ENCODE measurements at regions of chr21 and their contacts with region 1.

Region 1: DNA sequence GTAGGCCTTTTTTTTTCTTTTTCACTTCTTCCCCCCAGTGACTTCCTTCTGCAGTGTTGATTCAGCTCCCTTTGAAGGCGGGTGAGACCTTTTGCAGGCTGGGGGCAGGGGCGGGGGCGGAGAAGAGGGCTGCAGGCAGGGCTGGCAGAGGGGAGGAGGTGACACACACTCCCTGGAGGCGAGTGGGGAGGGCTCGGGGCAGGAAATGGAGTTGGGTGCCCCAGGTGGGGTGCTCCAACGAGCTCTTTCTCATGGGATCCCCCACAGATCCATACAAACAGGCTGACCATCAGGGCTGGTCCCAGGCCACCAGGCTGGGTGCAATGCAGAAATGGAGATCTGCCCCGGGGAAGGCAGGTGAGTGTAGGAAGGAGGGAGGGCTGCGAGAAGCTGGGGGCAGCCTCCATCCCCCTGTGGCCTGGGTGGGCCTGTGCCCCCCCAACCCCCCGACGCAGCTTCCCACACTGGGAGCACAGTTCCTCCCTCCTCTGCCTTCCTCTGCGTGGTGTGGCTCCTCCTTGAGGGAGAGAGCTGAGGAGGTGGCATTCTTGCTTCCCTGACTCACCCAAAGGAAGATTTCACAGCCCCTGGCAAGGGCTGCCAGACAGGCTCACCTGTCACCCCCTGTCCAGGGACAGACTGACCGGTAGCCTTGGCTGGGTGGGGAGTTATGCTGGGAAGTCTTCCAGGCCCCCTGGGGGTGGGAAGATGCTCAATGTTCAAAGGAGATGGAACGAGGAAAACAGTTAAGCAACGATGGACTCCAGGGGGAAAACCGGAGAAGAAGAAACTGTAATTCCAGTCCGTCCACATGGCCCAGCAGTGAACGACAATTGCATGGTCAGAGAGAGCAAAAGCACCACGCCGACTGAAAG is 7.1 kb upstream of the ITGB2 start:
- DNase-seq: peak; percentile 96
- ATAC-seq: peak; percentile 65
- H3K4me3 ChIP-seq: peak overlapping the region; percentile 63
- H3K27ac ChIP-seq: peak overlapping the region; percentile 98
- H3K4me1 ChIP-seq: peaks cover 73% of the 10 kb centered on the region
- H3K27me3 ChIP-seq: no peaks in the 10 kb centered on the region
- CTCF ChIP-seq: peak; percentile 35

Region 2: GRCh38 chr21:44778499-44778911 is 149.3 kb before region 1 on chr21:
- CTCF ChIA-PET with region 1: no interaction called
- POLR2A ChIA-PET with region 1: interaction called, 17 read pairs
- intact Hi-C with region 1: no loop called
- DNase-seq: peak; percentile 53
- ATAC-seq: peak; percentile 65
- H3K4me3 ChIP-seq: no peak overlapping the region
- H3K27ac ChIP-seq: no peak overlapping the region
- H3K4me1 ChIP-seq: no peaks in the 10 kb centered on the region; the same call in 1 of the 2 replicates
- H3K27me3 ChIP-seq: no peaks in the 10 kb centered on the region
- CTCF ChIP-seq: no peak

Region 3: DNA sequence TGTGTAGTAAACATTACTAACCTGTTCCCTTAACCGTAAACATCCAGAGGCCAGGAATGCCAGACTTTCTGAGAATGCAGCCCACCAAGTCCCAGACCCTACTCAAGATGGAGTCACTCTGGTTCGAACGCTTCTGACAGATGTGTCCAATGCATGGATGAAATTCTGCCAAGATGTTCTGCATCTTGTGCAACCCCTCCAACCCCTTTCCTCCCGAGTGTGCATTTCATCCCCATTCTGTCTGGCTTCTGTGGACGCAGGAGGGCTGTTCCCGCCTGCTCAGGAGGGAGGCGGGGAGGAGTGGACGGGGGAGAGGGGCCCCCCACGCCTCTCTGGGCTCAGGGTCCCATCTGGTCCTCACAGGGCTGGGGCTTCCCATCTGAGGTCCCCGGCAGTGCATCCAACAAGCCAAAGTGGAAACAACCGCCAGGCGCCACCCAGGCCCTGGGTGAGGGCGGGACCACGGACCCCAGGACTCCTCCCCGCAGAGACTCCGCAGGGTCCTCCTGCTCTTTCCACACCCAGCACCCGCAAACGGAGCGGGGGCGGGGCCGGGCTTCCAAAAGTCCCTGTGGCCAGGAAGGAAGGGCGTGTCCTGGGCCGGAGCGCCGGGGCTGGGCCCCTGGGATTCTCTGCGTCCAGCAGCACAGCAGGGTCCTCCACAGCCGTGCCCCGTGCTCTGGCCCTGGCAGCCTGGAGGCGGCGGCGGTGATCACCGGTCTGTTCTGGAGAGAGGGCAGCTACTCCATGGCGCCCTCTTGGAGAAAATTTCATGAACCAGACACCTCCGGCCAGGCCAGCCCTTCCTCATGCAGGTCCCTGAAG is 82.2 kb before region 1 on chr21:
- CTCF ChIA-PET with region 1: interaction called, 12 read pairs
- POLR2A ChIA-PET with region 1: no interaction called
- intact Hi-C with region 1: no loop called
- DNase-seq: peak; percentile 66
- ATAC-seq: peak; percentile 74
- H3K4me3 ChIP-seq: peak overlapping the region; percentile 36
- H3K27ac ChIP-seq: no peak overlapping the region
- H3K4me1 ChIP-seq: peaks cover 11% of the 10 kb centered on the region
- H3K27me3 ChIP-seq: no peaks in the 10 kb centered on the region
- CTCF ChIP-seq: peak; percentile 68

Region 4: DNA sequence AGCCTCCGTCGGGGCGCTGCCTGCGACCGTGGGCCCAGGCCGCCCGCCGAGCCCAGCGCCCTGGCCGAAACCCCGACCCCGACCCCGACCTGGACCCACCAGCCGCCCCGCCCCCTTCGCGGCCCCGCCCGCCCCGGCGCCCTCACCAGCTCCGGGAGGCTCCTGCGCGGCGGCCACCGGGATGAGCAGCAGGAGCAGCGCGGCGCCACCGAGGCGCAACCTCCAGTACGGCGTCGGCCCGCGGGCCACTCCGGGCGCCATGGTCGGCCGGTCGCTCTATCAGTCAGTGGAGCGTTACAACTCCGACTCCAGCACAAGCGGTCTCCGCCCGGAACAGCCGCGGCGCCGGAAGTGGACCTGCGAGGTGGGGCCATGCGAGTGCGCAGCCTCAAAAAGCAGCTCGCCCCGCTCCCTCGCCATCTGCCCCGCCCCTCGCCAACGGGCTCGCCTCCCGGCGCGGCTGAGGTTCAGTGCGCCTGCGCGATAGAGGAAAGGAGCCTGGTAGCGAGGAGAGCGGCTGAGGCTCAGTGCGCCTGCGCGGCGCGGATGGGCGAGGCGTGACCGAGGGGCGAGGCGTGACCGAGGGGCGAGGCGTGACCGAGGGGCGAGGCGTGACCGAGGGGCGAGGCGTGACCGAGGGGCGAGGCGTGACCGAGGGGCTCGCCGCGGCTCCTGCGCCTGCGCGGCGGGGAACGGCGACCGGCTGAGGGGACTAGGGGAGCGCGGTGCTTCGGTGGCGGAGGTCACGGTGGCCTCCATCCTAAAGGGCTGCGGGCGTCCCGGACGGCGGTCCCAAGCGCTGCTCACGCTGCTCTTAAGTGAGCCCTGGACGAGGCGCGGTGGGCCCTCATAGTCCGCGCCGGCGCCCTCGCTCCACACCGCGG is 54.2 kb before region 1 on chr21 and contains the start of gene PTTG1IP:
- CTCF ChIA-PET with region 1: interaction called, 9 read pairs
- POLR2A ChIA-PET with region 1: interaction called, 25 read pairs
- intact Hi-C with region 1: loop called (anchors 1 kb)
- DNase-seq: peak; percentile 99
- ATAC-seq: peak; percentile 48
- H3K4me3 ChIP-seq: peak within 1 kb of the TSS; percentile 80
- H3K27ac ChIP-seq: peak within 1 kb of the TSS; percentile 82
- H3K4me1 ChIP-seq: peaks cover 59% of the 10 kb centered on the region
- H3K27me3 ChIP-seq: no peaks in the 10 kb centered on the region
- CTCF ChIP-seq: no peak
- total RNA-seq, gene PTTG1IP: 330 and 455 TPM in 2 replicates

Region 5: DNA sequence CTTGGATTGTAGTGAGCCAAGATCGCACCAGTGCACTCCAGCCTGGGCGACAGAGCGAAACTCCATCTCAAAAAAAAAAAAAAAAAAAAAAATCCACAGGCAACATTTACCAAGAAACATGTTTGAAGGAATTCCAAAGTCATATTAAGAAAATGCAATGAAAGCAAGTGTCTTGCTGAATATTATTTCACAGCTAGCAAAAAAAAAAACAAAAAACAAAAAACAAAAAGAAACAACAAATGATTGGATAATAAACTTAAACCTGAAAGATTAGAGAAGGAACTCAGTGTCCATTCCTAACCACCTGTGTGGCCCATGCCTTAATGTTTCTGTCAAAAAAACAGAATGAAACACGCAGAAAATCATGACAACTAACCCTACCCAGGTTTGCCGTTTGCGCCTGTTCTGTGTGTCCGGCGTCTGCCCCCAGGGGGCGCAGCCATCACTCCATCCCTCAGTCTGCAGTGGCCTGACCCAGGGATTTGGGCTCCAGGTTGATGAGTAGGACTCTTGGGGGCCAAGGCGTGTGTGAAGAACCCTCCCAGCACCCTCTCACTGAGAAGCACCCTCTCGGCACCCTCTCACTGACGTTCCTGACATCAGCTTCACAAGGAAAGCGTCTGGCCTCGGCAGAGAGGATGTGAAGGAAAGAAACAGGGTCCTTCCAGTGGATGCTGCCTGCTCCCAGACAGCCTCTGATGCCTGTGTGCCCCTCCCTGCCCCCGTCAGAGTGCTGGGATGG is 35.1 kb before region 1 on chr21:
- CTCF ChIA-PET with region 1: no interaction called
- POLR2A ChIA-PET with region 1: no interaction called
- intact Hi-C with region 1: loop called (anchors 2 kb)
- DNase-seq: peak; percentile 70
- ATAC-seq: peak; percentile 86
- H3K4me3 ChIP-seq: no peak overlapping the region
- H3K27ac ChIP-seq: no peak overlapping the region
- H3K4me1 ChIP-seq: no peaks in the 10 kb centered on the region
- H3K27me3 ChIP-seq: no peaks in the 10 kb centered on the region
- CTCF ChIP-seq: peak; percentile 96

Region 6: DNA sequence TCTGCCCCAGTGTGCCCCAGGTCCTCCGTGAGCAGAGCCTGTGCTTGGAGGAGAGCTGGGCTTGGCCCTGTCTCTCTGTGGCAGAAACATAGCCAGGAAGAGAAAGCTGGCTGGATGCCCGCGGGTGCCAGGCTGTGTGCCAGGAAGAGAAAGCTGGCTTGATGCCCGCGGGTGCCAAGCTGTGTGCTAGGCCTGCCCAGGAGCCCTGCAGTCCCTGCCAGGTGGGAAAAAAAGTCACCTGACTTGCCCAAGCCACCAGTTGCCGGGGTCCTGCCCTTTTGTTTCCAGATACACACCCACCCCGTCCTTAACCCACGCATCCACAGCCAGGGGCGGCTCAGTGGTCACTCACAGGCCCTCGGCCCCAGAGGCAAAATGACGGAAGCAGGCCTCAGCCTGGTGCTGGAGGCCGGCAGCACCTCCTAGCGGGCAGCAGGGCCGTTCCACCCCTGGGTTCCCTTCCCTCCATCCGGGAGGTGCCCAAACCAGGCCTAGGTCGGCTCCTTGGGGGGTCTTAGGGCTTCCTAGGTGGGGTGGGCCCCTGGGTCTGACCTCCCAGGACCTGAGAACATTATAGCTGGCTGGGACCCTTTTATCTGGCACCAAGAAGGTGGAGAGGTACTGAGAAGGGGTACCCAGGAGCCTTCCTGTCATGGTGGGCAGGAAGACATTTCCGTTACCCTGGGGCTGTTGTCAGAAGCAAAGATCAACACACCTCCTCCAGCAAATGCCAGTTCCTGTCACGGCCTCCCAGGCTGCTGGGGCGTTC is 16.3 kb before region 1 on chr21:
- CTCF ChIA-PET with region 1: interaction called, 12 read pairs
- POLR2A ChIA-PET with region 1: interaction called, 18 read pairs
- intact Hi-C with region 1: loop called (anchors 2 kb)
- DNase-seq: peak; percentile 92
- ATAC-seq: peak; percentile 72
- H3K4me3 ChIP-seq: no peak overlapping the region
- H3K27ac ChIP-seq: peak overlapping the region; percentile 76
- H3K4me1 ChIP-seq: peaks cover 64% of the 10 kb centered on the region
- H3K27me3 ChIP-seq: no peaks in the 10 kb centered on the region
- CTCF ChIP-seq: peak; percentile 93

Region 7: DNA sequence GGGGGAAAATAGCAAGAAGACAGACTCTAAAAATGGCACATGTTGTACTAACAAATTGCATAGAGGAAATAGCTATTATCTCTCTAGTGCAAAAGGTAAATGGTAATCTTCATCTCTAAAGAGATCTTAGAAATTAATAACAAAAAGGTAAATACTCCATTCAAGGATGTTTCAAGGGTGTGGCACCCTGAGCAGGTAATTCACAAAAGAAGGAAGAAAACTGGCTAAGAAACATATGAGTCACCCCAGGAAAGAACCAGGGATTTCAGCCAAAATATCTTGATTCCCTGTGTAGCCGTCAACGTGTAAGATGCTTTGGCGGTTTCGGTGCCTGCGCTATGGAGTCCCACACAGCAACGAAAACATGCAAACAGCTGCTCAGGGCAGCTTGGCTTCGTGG is 10.9 kb before region 1 on chr21:
- CTCF ChIA-PET with region 1: interaction called, 12 read pairs
- POLR2A ChIA-PET with region 1: interaction called, 18 read pairs
- intact Hi-C with region 1: loop called (anchors 1 kb)
- DNase-seq: peak; percentile 94
- ATAC-seq: peak; percentile 66
- H3K4me3 ChIP-seq: peak overlapping the region; percentile 4; the same call in 1 of the 2 replicates
- H3K27ac ChIP-seq: peak overlapping the region; percentile 73
- H3K4me1 ChIP-seq: peaks cover 57% of the 10 kb centered on the region
- H3K27me3 ChIP-seq: no peaks in the 10 kb centered on the region
- CTCF ChIP-seq: no peak

Region 8: GRCh38 chr21:44982558-44983244 is 54.9 kb after region 1 on chr21:
- CTCF ChIA-PET with region 1: no interaction called
- POLR2A ChIA-PET with region 1: no interaction called
- intact Hi-C with region 1: no loop called
- DNase-seq: peak; percentile 11
- ATAC-seq: peak; percentile 46
- H3K4me3 ChIP-seq: no peak overlapping the region
- H3K27ac ChIP-seq: no peak overlapping the region
- H3K4me1 ChIP-seq: peaks cover 5% of the 10 kb centered on the region; the same call in 1 of the 2 replicates
- H3K27me3 ChIP-seq: no peaks in the 10 kb centered on the region
- CTCF ChIP-seq: no peak